ENCODE measurements at regions of chr18 and their contacts with region 1.

Region 1: GRCh38 chr18:12376718-12377555 is at the start of gene AFG3L2:
- DNase-seq: peak; percentile 100
- H3K4me3 ChIP-seq: peak within 1 kb of the TSS; percentile 89
- H3K4me3 Mint-ChIP-seq: peak within 1 kb of the TSS; percentile 89 to 96 (median 89)
- H3K27ac ChIP-seq: peak within 1 kb of the TSS; percentile 95
- H3K27ac Mint-ChIP-seq: peak within 1 kb of the TSS; percentile 88 to 98 (median 95)
- H3K4me1 ChIP-seq: peaks cover 45% of the 10 kb centered on the region
- H3K4me1 Mint-ChIP-seq: peaks cover 42 to 50% (median 46%) of the 10 kb centered on the region in 3 donors
- H3K27me3 ChIP-seq: no peaks in the 10 kb centered on the region
- H3K27me3 Mint-ChIP-seq: no peaks in the 10 kb centered on the region
- total RNA-seq, gene AFG3L2: 75.6 to 75.8 TPM

Region 2: GRCh38 chr18:12391618-12392165 is 14.8 kb after region 1 on chr18:
- CTCF ChIA-PET with region 1: interaction called, 19 read pairs
- POLR2A ChIA-PET with region 1: no interaction called
- DNase-seq: peak; percentile 27 to 64 (median 38)
- H3K4me3 ChIP-seq: no peak overlapping the region
- H3K4me3 Mint-ChIP-seq: no peak overlapping the region
- H3K27ac ChIP-seq: no peak overlapping the region
- H3K27ac Mint-ChIP-seq: peak overlapping the region in 1 of 8 donors; percentile 41
- H3K4me1 ChIP-seq: no peaks in the 10 kb centered on the region
- H3K4me1 Mint-ChIP-seq: no peaks in the 10 kb centered on the region
- H3K27me3 ChIP-seq: peaks cover 7% of the 10 kb centered on the region
- H3K27me3 Mint-ChIP-seq: peaks cover 7 to 15% of the 10 kb centered on the region in 2 donors

Region 3: GRCh38 chr18:12408247-12408869 is 31.4 kb after region 1 on chr18:
- CTCF ChIA-PET with region 1: interaction called, 3 read pairs
- POLR2A ChIA-PET with region 1: interaction called, 24 read pairs
- DNase-seq: peak in 1 of 5 donors; percentile 15
- H3K4me3 ChIP-seq: no peak overlapping the region
- H3K4me3 Mint-ChIP-seq: peak overlapping the region; percentile 54 to 91 (median 75)
- H3K27ac ChIP-seq: no peak overlapping the region
- H3K27ac Mint-ChIP-seq: peak overlapping the region in 7 of 8 donors; percentile 7 to 73 (median 38)
- H3K4me1 ChIP-seq: peaks cover 14% of the 10 kb centered on the region
- H3K4me1 Mint-ChIP-seq: peaks cover 14 to 31% (median 25%) of the 10 kb centered on the region in 3 donors
- H3K27me3 ChIP-seq: no peaks in the 10 kb centered on the region
- H3K27me3 Mint-ChIP-seq: peaks cover 9 to 11% of the 10 kb centered on the region in 2 donors

Region 4: GRCh38 chr18:12702221-12703095 is 325.5 kb after region 1 on chr18 and contains the starts of genes CEP76 and PSMG2:
- CTCF ChIA-PET with region 1: interaction called, 5 read pairs
- POLR2A ChIA-PET with region 1: interaction called, 10 read pairs
- DNase-seq: peak; percentile 75 to 90 (median 86)
- H3K4me3 ChIP-seq: peak within 1 kb of the TSS; percentile 87
- H3K4me3 Mint-ChIP-seq: peak within 1 kb of the TSS; percentile 91 to 99 (median 96)
- H3K27ac ChIP-seq: peak within 1 kb of the TSS; percentile 84
- H3K27ac Mint-ChIP-seq: peak within 1 kb of the TSS; percentile 90 to 100 (median 98)
- H3K4me1 ChIP-seq: peaks cover 42% of the 10 kb centered on the region
- H3K4me1 Mint-ChIP-seq: peaks cover 43 to 61% (median 59%) of the 10 kb centered on the region in 3 donors
- H3K27me3 ChIP-seq: no peaks in the 10 kb centered on the region
- H3K27me3 Mint-ChIP-seq: no peaks in the 10 kb centered on the region
- total RNA-seq, gene CEP76: 11.3 to 15.5 TPM
- total RNA-seq, gene PSMG2: 107 to 116 TPM

Region 5: DNA sequence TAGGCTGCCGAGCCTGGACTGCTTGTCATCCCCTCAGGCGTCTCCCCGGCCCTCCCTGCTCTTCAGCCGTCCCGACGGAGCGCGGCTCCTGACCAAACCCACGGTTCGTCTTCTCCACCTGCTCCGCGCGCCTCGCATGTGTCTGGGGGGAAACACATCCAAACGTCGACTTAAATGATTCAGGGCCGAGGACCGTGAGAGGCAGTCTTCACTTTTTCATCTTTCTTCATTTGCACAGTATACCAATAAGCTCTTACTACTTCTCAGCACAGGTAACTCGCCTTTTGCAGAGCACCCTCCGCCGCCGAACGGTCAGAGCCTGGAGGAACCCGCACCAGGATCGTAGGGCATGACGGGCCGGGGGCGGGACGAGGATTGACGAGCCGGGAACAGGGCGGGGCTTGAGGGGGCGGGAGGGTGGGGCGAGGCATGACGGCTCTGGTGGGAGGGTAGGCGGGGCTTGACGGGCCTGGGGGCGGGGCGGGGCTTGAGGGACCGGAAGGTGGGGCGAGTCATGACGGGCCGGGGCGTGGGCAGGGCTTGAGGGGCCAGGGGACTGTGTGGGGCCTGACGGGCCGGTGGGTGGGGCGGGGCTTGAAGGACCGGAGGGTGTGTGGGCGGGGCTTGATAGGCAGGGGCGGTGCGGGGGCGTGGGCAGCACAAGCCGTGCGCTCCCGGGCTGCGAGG is 570.6 kb after region 1 on chr18 and contains the start of gene SEH1L:
- CTCF ChIA-PET with region 1: no interaction called
- POLR2A ChIA-PET with region 1: interaction called, 13 read pairs
- DNase-seq: peak; percentile 97 to 100 (median 98)
- H3K4me3 ChIP-seq: peak within 1 kb of the TSS; percentile 84
- H3K4me3 Mint-ChIP-seq: peak within 1 kb of the TSS; percentile 90 to 96 (median 94)
- H3K27ac ChIP-seq: peak within 1 kb of the TSS; percentile 90
- H3K27ac Mint-ChIP-seq: peak within 1 kb of the TSS; percentile 94 to 100 (median 98)
- H3K4me1 ChIP-seq: peaks cover 32% of the 10 kb centered on the region
- H3K4me1 Mint-ChIP-seq: peaks cover 22 to 40% (median 37%) of the 10 kb centered on the region in 3 donors
- H3K27me3 ChIP-seq: no peaks in the 10 kb centered on the region
- H3K27me3 Mint-ChIP-seq: peaks cover 0 to 9% of the 10 kb centered on the region in 2 donors
- total RNA-seq, gene SEH1L: 132 to 141 TPM

Measured in CD8-positive, alpha-beta memory T cell (primary cell).